Colonic mucosa (tissue), 4 donors: ENCODE measurements at regions of chr10 and their contacts with region 1.

Region 1: GRCh38 chr10:86399879-86400704 is 33.5 kb upstream of the GRID1 start:
- DNase-seq: peak; percentile 98
- H3K4me3 ChIP-seq: peak overlapping the region; percentile 59
- H3K27ac ChIP-seq: peak overlapping the region; percentile 81
- H3K4me1 ChIP-seq: no peaks in the 10 kb centered on the region
- H3K27me3 ChIP-seq: no peaks in the 10 kb centered on the region
- CTCF ChIP-seq: peak; percentile 97

Region 2: DNA sequence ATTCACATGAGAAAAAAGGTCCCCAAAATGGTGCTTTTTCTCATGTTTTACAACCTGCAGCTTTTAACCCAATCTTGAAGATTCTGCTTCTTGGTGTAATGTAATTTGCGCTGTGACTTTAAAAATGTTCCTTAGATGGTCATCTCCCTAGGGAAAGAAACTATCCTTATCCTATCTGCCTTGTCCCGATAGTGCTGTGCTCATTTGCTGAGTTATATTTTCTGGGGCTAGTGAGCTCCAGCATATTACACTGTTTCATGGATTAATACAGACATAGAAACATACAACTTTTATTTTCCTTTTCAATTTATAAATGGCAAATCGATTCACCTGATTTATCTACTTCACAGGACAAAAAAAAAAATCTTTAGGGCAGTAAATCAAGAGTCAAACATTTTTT is 118.7 kb after region 1 on chr10:
- intact Hi-C with region 1: loop called (anchors 5 kb)
- DNase-seq: no peak
- H3K4me3 ChIP-seq: no peak overlapping the region
- H3K27ac ChIP-seq: no peak overlapping the region
- H3K4me1 ChIP-seq: peaks cover 13% of the 10 kb centered on the region
- H3K27me3 ChIP-seq: no peaks in the 10 kb centered on the region
- CTCF ChIP-seq: no peak

Region 3: GRCh38 chr10:86585726-86586048 is 185.6 kb after region 1 on chr10:
- intact Hi-C with region 1: loop called (anchors 1 kb)
- DNase-seq: no peak
- H3K4me3 ChIP-seq: no peak overlapping the region
- H3K27ac ChIP-seq: no peak overlapping the region
- H3K4me1 ChIP-seq: no peaks in the 10 kb centered on the region
- H3K27me3 ChIP-seq: no peaks in the 10 kb centered on the region
- CTCF ChIP-seq: no peak